ENCODE measurements at regions of chr6 and their contacts with region 1.

Region 1: GRCh38 chr6:79777713-79778579 is 146.8 kb downstream of the SH3BGRL2 start:
- DNase-seq: peak; percentile 92
- H3K4me3 Mint-ChIP-seq: peak overlapping the region; percentile 64
- H3K27ac Mint-ChIP-seq: peak overlapping the region; percentile 50
- H3K4me1 Mint-ChIP-seq: peaks cover 6% of the 10 kb centered on the region
- H3K27me3 Mint-ChIP-seq: no peaks in the 10 kb centered on the region

Region 2: GRCh38 chr6:79233611-79234149 is 544.3 kb before region 1 on chr6:
- CTCF ChIA-PET with region 1: no interaction called
- intact Hi-C with region 1: loop called (anchors 1 kb)
- DNase-seq: peak; percentile 73
- H3K4me3 Mint-ChIP-seq: peak overlapping the region; percentile 95
- H3K27ac Mint-ChIP-seq: peak overlapping the region; percentile 78
- H3K4me1 Mint-ChIP-seq: peaks cover 14% of the 10 kb centered on the region
- H3K27me3 Mint-ChIP-seq: no peaks in the 10 kb centered on the region

Region 3: DNA sequence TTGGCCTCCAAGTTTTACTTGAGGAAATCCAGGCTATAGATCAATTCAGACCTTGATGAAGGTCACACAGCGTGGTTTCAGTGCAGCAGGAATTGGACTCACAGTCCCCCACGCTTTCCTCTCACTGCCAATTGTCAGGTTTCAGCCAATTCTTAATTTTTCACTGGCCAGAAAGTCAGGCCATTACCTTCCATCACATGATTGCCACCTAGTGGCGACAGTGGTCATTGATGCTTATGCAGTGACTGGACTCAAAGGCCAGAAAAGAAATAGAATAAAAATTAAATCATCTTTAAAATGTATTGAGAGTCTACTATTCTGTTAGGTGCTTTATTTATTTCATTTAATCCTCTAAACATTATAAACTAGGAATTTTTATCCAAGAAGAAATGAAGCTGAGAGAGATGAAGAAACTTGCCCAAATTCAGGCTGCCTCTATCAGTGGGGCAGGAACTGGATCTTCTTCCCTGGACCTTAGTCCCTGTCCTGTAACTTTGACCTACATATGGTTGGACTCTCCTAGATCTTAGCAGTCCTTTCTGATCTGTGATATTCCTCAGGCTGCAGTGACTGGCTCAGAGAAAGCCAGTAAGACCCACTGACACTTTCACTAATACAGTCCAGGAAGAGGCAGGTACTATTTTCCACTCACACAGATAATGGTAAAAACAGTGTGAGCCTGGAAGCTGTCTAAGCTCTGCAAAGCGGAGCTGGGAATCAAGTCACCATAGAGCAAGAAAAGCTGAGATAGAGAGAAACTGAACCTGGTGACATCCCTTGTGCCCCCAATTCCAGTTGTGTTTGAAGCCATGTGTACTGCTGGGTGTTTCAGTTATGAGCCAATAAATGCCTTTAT is 36.1 kb after region 1 on chr6:
- CTCF ChIA-PET with region 1: interaction called, 21 read pairs
- intact Hi-C with region 1: loop called (anchors 1 kb)
- DNase-seq: peak; percentile 84
- H3K4me3 Mint-ChIP-seq: no peak overlapping the region
- H3K27ac Mint-ChIP-seq: no peak overlapping the region
- H3K4me1 Mint-ChIP-seq: no peaks in the 10 kb centered on the region
- H3K27me3 Mint-ChIP-seq: no peaks in the 10 kb centered on the region

Region 4: GRCh38 chr6:79949233-79949632 is 171.3 kb after region 1 on chr6:
- CTCF ChIA-PET with region 1: interaction called, 3 read pairs
- intact Hi-C with region 1: loop called (anchors 1 kb)
- DNase-seq: peak; percentile 83
- H3K4me3 Mint-ChIP-seq: no peak overlapping the region
- H3K27ac Mint-ChIP-seq: no peak overlapping the region
- H3K4me1 Mint-ChIP-seq: peaks cover 14% of the 10 kb centered on the region
- H3K27me3 Mint-ChIP-seq: peaks cover 34% of the 10 kb centered on the region

Region 5: GRCh38 chr6:80004173-80005072 is 226.5 kb after region 1 on chr6 and contains the start of gene TTK:
- CTCF ChIA-PET with region 1: no interaction called
- intact Hi-C with region 1: loop called (anchors 10 kb)
- DNase-seq: peak; percentile 93
- H3K4me3 Mint-ChIP-seq: peak within 1 kb of the TSS; percentile 95
- H3K27ac Mint-ChIP-seq: peak within 1 kb of the TSS; percentile 89
- H3K4me1 Mint-ChIP-seq: peaks cover 16% of the 10 kb centered on the region
- H3K27me3 Mint-ChIP-seq: peaks cover 1% of the 10 kb centered on the region
- total RNA-seq, gene TTK: 45.9 to 51.1 TPM

Region 6: GRCh38 chr6:80094017-80094416 is 316.1 kb after region 1 on chr6:
- CTCF ChIA-PET with region 1: no interaction called
- intact Hi-C with region 1: loop called (anchors 2 kb)
- DNase-seq: peak; percentile 14
- H3K4me3 Mint-ChIP-seq: no peak overlapping the region
- H3K27ac Mint-ChIP-seq: no peak overlapping the region
- H3K4me1 Mint-ChIP-seq: no peaks in the 10 kb centered on the region
- H3K27me3 Mint-ChIP-seq: no peaks in the 10 kb centered on the region